KBM-7 (cell line): ENCODE measurements at regions of chr4 and their contacts with region 1.

Region 1: DNA sequence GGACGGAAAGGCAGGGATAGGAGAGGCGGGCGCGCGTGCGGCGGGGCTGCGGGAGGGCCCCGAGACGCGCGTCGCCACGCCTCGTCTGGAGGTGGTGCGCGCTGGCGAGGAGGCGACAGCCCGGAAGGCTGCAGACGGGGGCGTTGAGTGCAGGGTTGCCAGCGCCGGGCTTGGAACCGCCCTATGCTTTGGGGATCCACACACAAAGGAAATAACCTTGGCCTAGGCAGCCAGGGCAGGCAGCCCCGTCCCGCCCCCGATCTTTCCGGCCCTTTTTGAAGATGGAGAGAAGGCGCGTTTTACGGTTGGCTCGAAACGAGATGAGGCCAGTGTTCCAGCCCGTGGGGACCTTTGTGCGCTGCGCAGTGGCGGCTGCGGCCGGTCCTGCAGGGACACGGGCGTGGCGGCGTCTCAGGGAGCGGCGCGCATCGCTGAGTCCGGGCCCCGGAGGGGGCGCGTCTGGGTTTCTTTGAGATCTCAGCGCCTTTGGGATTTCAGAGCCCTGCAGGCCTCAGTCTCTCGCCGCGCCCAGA is 50.8 kb upstream of the TRIM2 start:
- DNase-seq: peak; percentile 87

Region 2: GRCh38 chr4:153318696-153319320 is 165.4 kb after region 1 on chr4:
- in situ Hi-C with region 1: loop called (anchors 25 kb)
- DNase-seq: peak; percentile 51

Region 3: GRCh38 chr4:153594210-153594609 is 440.8 kb after region 1 on chr4:
- in situ Hi-C with region 1: loop called (anchors 25 kb)
- DNase-seq: no peak